IMR-90 (cell line): ENCODE measurements at regions of chr11 and their contacts with region 1.

Region 1: GRCh38 chr11:100739666-100740065 is 52.6 kb downstream of the ARHGAP42 start:
- DNase-seq: peak; percentile 90
- ATAC-seq: peak; percentile 96
- H3K4me3 ChIP-seq: no peak overlapping the region
- H3K27ac ChIP-seq: no peak overlapping the region
- H3K4me1 ChIP-seq: peaks cover 12% of the 10 kb centered on the region
- H3K27me3 ChIP-seq: no peaks in the 10 kb centered on the region
- CTCF ChIP-seq: no peak
- POLR2A ChIP-seq: no peak
- RAD21 ChIP-seq: no peak

Region 2: DNA sequence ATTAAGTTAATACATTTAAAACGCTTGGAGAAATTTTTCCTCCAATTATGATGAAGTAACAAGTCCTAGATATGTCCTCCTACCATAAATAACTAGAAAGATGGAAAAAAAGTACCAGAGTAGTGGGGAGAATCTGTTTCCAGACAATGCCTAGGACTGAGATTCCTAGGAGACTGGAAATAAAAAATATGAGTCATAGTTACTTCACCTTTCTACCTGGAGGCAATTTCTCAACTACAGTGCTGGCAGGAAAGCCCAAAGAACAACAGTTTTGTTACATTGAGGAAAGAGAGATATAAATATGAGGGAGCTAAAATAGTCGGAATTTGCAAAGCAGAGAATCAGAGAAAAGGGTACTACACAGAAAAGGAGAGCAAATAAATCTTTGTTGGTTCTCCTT is 254.7 kb before region 1 on chr11:
- CTCF ChIA-PET with region 1: no interaction called
- POLR2A ChIA-PET with region 1: no interaction called
- dilution Hi-C with region 1: no loop called
- in situ Hi-C with region 1: no loop called
- intact Hi-C with region 1: no loop called
- DNase-seq: no peak
- ATAC-seq: no peak
- H3K4me3 ChIP-seq: no peak overlapping the region
- H3K27ac ChIP-seq: no peak overlapping the region
- H3K4me1 ChIP-seq: no peaks in the 10 kb centered on the region
- H3K27me3 ChIP-seq: no peaks in the 10 kb centered on the region
- CTCF ChIP-seq: no peak
- POLR2A ChIP-seq: no peak
- RAD21 ChIP-seq: no peak

Region 3: DNA sequence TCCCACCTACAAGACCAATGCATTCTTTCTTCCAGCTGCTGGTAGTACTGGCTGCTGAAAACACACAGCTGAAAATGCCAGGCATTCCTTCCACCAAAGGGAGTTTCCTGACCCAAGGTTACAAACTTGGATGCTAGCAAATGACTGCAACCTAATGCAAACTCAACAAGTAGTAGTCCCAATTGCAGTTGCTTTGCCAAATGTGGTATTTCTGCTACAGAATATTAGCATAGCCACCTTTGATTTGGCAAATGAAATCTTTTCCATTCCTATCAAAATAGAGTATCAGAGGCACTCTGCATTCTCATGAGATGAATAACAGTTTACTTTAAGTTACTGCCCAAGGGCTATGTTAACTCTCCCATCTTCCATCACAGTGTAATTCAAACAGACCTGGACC is 224.6 kb before region 1 on chr11:
- CTCF ChIA-PET with region 1: no interaction called
- POLR2A ChIA-PET with region 1: no interaction called
- dilution Hi-C with region 1: no loop called
- in situ Hi-C with region 1: no loop called
- intact Hi-C with region 1: no loop called
- DNase-seq: peak; percentile 42
- ATAC-seq: peak; percentile 82
- H3K4me3 ChIP-seq: no peak overlapping the region
- H3K27ac ChIP-seq: no peak overlapping the region
- H3K4me1 ChIP-seq: peaks cover 3% of the 10 kb centered on the region; the same call in 1 of the 2 replicates
- H3K27me3 ChIP-seq: peaks cover 2% of the 10 kb centered on the region; the same call in 1 of the 2 replicates
- CTCF ChIP-seq: no peak
- POLR2A ChIP-seq: no peak
- RAD21 ChIP-seq: no peak

Region 4: GRCh38 chr11:100687630-100688395 is 51.9 kb before region 1 on chr11:
- CTCF ChIA-PET with region 1: interaction called, 3 read pairs
- POLR2A ChIA-PET with region 1: no interaction called
- dilution Hi-C with region 1: no loop called
- in situ Hi-C with region 1: loop called (anchors 5 kb)
- intact Hi-C with region 1: no loop called
- DNase-seq: peak; percentile 85
- ATAC-seq: peak; percentile 82
- H3K4me3 ChIP-seq: peak overlapping the region; percentile 87
- H3K27ac ChIP-seq: peak overlapping the region; percentile 83
- H3K4me1 ChIP-seq: no peaks in the 10 kb centered on the region
- H3K27me3 ChIP-seq: no peaks in the 10 kb centered on the region
- CTCF ChIP-seq: peak; percentile 63
- POLR2A ChIP-seq: no peak
- RAD21 ChIP-seq: peak; percentile 39

Region 5: DNA sequence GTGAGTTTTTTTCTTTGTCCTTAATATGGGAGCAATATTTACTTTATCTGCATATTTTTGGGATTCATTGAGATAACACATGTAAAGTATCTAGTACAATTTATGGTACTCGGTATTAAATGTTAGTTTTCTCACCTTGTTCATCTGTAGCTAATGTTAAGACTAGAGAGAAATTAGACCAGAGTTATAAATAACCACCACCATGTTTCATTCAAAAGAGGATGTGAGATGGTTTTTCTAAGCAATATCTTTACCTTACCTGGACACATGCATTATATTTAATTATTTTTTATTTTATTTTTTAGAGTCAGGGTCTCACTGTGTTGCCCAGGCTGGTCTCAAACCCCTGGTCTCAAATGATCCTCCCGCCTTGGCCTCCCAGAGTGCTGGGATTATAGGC is 34.2 kb before region 1 on chr11:
- CTCF ChIA-PET with region 1: no interaction called
- POLR2A ChIA-PET with region 1: no interaction called
- dilution Hi-C with region 1: no loop called
- in situ Hi-C with region 1: no loop called
- intact Hi-C with region 1: loop called (anchors 5 kb)
- DNase-seq: no peak
- ATAC-seq: no peak
- H3K4me3 ChIP-seq: no peak overlapping the region
- H3K27ac ChIP-seq: no peak overlapping the region
- H3K4me1 ChIP-seq: peaks cover 7% of the 10 kb centered on the region
- H3K27me3 ChIP-seq: no peaks in the 10 kb centered on the region
- CTCF ChIP-seq: no peak
- POLR2A ChIP-seq: no peak
- RAD21 ChIP-seq: no peak

Region 6: DNA sequence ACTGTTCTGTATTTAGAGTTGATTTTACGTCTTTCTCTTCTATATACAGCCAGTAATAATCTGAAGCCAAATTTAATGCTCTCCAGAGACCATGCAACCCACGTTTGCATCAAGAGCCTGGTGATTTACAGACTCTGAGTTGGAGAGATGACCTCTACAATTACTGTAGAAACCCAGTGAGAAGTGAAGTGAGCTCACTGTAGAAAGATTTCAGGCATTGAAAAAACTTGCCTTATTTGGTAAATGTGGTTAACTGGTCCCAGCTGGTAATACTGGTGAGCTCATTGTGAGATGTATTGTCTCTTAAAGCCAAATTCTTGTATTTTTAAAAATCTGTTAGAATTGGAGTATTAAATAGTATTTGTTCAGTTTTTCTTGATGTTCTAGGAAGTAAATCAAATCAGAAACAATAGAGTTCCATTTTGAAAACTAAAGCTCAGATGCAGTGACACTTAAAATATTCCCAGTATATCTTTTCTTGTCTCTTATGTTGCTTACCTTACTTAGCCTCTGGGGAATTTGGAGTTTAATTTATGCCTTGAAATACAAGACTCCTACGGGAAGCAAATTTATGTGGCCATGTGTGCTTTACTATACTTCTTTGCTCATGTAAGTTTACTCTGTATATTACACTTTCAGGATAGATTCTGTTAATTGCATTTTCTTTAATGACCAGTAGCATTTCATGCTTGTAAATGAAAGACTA is 137.3 kb after region 1 on chr11:
- CTCF ChIA-PET with region 1: no interaction called
- POLR2A ChIA-PET with region 1: interaction called, 10 read pairs
- dilution Hi-C with region 1: no loop called
- in situ Hi-C with region 1: no loop called
- intact Hi-C with region 1: no loop called
- DNase-seq: peak; percentile 98
- ATAC-seq: peak; percentile 94
- H3K4me3 ChIP-seq: no peak overlapping the region
- H3K27ac ChIP-seq: peak overlapping the region; percentile 100; the same call in 1 of the 2 replicates
- H3K4me1 ChIP-seq: peaks cover 19% of the 10 kb centered on the region
- H3K27me3 ChIP-seq: no peaks in the 10 kb centered on the region
- CTCF ChIP-seq: no peak
- POLR2A ChIP-seq: 0 out of 2 replicates have a peak, but pooled peaks have one; percentile 46
- RAD21 ChIP-seq: no peak